Activated T-helper 2 cell treated with anti-CD3 and anti-CD28 coated beads, Interferon-gamma antibody, Interleukin-2, Interleukin-4, amounts not matched to agents 10 μg/mL and 5 μg/mL and 100 μg/mL, durations not matched to agents 14 hours and 24 hours and 36 hours (primary cell): ENCODE measurements at regions of chr14 and their contacts with region 1.

Region 1: GRCh38 chr14:89613260-89614008 is 196.4 kb upstream of the FOXN3 start:
- DNase-seq: no peak
- H3K4me3 Mint-ChIP-seq: peak overlapping the region; percentile 59
- H3K27ac Mint-ChIP-seq: peak overlapping the region; percentile 86
- H3K4me1 Mint-ChIP-seq: peaks cover 69% of the 10 kb centered on the region
- H3K27me3 Mint-ChIP-seq: no peaks in the 10 kb centered on the region

Region 2: GRCh38 chr14:89303457-89304435 is 309.7 kb before region 1 on chr14:
- intact Hi-C with region 1: no loop called
- DNase-seq: no peak
- H3K4me3 Mint-ChIP-seq: peak overlapping the region; percentile 63
- H3K27ac Mint-ChIP-seq: peak overlapping the region; percentile 95
- H3K4me1 Mint-ChIP-seq: peaks cover 45% of the 10 kb centered on the region
- H3K27me3 Mint-ChIP-seq: no peaks in the 10 kb centered on the region

Region 3: GRCh38 chr14:89430391-89431236 is 182.8 kb before region 1 on chr14:
- intact Hi-C with region 1: loop called (anchors 2 kb)
- DNase-seq: peak; percentile 52
- H3K4me3 Mint-ChIP-seq: peak overlapping the region; percentile 84
- H3K27ac Mint-ChIP-seq: peak overlapping the region; percentile 94
- H3K4me1 Mint-ChIP-seq: peaks cover 59% of the 10 kb centered on the region
- H3K27me3 Mint-ChIP-seq: no peaks in the 10 kb centered on the region

Region 4: DNA sequence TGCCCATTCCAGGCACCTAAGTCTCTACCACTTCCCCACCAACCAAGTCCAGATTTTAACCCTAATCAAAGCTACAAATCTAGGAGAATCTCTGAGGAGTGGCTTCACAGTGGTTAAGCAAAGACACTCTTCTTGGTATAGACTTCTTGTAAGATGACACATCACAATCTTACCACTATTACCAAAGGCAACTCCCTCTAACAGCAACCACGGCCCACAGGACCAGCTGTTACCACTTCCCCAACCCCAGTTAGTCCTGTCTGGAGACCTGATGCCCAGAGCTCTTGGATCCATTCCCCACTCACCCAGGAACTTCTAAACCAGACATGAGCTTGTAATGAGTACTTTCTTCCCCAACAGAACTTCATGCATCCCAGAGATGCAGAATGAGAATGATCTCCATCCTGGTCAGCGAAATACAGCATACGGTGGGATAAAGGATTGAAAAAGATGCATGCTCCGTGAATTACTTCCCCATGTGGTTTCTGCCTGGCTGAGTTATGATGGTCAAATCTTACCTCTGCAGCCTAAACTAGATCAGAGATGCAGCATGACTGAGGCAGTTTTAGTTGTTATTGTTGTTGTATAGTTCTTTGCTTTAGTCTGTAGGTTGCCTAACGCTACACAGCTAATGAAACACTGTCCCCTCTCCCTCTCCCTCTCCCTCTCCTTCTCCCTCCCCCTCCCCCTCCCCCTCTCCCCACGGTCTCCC is 108.7 kb before region 1 on chr14:
- intact Hi-C with region 1: loop called (anchors 1 kb)
- DNase-seq: no peak
- H3K4me3 Mint-ChIP-seq: no peak overlapping the region
- H3K27ac Mint-ChIP-seq: peak overlapping the region; percentile 51
- H3K4me1 Mint-ChIP-seq: peaks cover 43% of the 10 kb centered on the region
- H3K27me3 Mint-ChIP-seq: no peaks in the 10 kb centered on the region

Region 5: DNA sequence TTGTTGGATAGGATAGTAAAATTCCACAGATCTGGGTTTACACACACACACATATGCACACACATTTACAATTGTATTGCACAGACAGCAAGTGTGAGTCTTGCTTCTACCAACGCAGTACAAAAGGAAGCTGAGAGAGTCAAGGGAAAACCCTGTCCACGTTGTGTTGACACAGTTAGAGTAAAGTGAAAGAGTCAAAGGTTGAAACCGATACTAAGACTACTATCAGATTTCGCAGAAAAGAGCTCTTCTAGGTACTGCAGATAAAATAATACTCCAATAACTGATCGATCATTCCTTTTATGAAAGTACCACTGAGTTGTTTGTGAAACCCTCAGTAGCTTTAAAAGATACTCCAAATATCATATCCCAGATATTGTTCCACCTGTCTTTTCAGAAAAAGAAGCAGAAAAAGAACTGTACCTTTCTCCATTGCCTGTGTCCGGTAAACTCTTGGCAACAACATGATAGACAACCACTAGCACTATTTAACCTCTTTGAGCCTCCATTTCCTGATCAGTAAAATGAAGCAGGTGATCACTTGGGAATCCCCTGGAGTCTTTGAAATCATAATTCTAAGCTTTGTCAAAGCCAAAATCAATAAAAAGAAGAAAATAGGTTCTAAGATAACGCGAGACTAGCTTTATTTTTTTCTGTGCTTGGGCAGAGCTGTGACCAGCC is 28.2 kb after region 1 on chr14:
- intact Hi-C with region 1: loop called (anchors 1 kb)
- DNase-seq: peak; percentile 42
- H3K4me3 Mint-ChIP-seq: peak overlapping the region; percentile 50
- H3K27ac Mint-ChIP-seq: peak overlapping the region; percentile 93
- H3K4me1 Mint-ChIP-seq: peaks cover 65% of the 10 kb centered on the region
- H3K27me3 Mint-ChIP-seq: no peaks in the 10 kb centered on the region